Endothelial cell of umbilical vein (primary cell): ENCODE measurements at regions of chr6 and their contacts with region 1.

Region 1: DNA sequence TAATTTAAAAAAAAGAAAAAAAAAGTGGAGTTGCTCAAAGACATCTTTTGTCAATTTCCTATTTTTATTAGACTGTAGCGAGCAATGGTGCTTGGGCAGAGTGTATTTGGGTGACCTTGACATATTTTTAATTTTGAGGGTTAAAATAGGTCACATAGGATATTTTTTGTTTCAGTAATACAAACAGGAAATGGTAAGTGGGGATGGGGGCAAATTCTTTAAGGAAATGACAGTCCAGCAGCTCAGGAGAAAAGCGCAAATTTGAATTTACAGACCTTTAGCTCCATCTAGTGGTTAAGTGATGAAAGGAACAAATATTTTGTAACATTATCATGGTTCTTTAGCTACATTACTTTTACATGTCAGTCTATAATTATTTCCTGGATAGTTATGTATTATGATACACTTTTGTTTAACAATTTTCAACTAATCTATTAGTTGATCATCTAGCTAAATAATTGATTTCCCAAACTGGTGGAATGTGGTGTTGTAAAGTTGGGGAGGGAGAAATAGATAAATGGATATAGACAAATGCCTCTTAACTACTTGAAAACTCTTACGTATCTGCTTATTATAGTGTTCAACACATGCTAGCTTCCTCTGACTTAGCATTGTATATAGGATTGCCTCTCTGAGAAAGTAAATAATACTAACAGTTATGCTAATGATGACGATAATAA is 10.0 kb downstream of the CITED2 start:
- DNase-seq: peak; percentile 66
- H3K4me3 ChIP-seq: no peak overlapping the region
- H3K27ac ChIP-seq: no peak overlapping the region
- H3K4me1 ChIP-seq: peaks cover 18% of the 10 kb centered on the region
- H3K27me3 ChIP-seq: no peaks in the 10 kb centered on the region
- CTCF ChIP-seq: peak; percentile 19 to 43
- POLR2A ChIP-seq: no peak

Region 2: DNA sequence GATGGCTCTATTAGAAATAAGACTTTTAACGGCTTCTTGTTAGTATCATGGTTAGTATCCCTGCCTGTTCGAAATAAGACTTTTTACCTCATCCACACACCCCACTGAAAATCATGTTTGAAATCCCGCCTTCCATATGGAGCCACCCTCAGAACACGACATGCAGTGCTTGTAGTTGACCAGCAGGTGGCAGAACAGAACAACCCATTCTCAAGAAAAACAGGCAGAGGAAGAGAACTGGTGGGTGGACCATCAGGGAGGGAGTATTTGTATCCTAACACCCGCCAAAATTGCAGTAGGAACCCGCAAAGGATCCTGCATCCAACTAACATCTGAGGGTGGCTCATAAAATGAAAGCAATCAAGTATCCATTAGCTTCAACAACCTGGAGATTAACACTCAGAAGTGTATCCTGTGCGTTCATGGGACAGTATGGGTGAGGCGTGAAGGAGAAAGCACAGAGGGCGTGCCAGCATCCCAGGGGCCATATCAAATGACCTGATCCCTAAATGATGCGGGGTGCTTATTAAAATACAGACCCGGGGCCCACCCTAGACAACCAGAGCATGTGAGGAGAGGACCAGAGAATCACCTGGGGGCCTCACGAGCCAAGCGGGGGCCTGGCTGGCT is 775.5 kb before region 1 on chr6:
- CTCF ChIA-PET with region 1: interaction called, 6 read pairs
- POLR2A ChIA-PET with region 1: no interaction called
- dilution Hi-C with region 1: no loop called
- intact Hi-C with region 1: loop called (anchors 1 kb)
- DNase-seq: peak; percentile 78
- H3K4me3 ChIP-seq: no peak overlapping the region
- H3K27ac ChIP-seq: no peak overlapping the region
- H3K4me1 ChIP-seq: peaks cover 21% of the 10 kb centered on the region
- H3K27me3 ChIP-seq: no peaks in the 10 kb centered on the region
- CTCF ChIP-seq: peak; percentile 80 to 85
- POLR2A ChIP-seq: no peak

Region 3: DNA sequence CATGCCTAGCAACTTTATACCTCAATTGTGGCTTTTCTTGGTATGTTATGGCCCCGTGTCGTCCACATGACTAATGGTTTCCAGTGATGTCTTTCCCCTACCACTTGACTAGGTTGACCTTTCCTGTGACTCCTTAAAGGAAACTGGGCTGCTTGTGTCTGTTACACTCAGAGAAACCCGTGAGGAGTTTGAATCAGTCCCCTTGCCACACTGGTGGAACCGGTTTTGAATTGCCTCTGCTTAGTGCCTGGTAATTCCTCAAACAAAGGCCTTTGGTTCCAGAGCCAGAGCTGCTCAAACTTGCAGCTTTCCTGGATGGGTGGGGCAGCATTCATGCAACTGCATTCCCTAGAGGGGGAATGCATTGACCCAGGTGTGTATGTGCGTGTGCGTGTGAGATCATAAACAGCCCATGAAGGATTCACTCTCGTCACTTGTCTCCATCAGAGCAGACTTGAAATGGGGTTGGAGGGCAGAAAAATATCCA is 546.6 kb before region 1 on chr6:
- CTCF ChIA-PET with region 1: interaction called, 56 read pairs
- POLR2A ChIA-PET with region 1: no interaction called
- dilution Hi-C with region 1: no loop called
- intact Hi-C with region 1: loop called (anchors 1 kb)
- DNase-seq: peak; percentile 56
- H3K4me3 ChIP-seq: no peak overlapping the region
- H3K27ac ChIP-seq: no peak overlapping the region
- H3K4me1 ChIP-seq: peaks cover 23% of the 10 kb centered on the region
- H3K27me3 ChIP-seq: no peaks in the 10 kb centered on the region
- CTCF ChIP-seq: no peak
- POLR2A ChIP-seq: no peak

Region 4: DNA sequence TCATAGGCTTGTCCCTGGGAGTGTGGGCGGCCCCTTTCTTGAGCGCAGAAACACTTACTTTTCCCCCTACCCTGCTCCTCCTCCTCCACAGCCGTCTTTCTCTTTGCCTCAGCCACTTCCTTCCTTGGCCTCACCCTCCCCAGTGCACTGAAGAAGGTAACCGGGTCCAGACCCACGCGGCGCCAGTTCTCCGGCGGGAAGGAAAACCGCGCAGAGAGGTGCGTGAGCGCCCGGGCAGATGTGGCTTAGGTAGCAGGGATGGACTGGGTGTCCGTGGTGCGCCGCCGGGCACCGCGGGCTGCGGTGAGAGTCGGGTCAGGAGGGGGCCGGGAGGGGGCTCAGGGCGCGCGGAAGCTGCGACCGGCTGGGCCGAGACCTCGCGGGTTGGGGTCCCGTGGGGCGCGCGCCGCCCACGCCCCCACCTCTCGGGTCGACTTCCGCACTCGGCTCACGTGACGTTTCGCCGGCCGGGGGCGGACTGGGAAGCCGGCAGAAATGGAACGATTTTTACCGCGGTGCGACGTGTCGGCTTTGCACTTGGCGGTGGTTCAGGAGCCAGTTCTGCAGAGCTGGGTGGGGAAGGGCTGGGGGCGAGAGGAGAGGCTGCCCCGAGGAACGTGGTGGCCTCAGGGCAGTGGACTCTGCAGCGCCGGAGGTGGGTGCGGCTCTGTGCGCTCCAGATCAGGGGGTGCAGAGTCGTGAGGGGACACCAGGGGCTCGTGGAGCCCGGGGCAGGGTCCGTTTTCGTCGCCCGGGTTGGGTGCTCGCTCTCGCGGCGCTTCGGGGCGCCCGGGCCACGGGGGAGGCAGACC is 335.6 kb before region 1 on chr6 and contains the start of gene ABRACL:
- CTCF ChIA-PET with region 1: interaction called, 3 read pairs
- POLR2A ChIA-PET with region 1: no interaction called
- dilution Hi-C with region 1: no loop called
- intact Hi-C with region 1: loop called (anchors 2 kb)
- DNase-seq: peak; percentile 70
- H3K4me3 ChIP-seq: peak within 1 kb of the TSS; percentile 74 to 94 (median 77)
- H3K27ac ChIP-seq: peak within 1 kb of the TSS; percentile 81
- H3K4me1 ChIP-seq: peaks cover 19% of the 10 kb centered on the region
- H3K27me3 ChIP-seq: no peaks in the 10 kb centered on the region
- CTCF ChIP-seq: no peak
- POLR2A ChIP-seq: peak; percentile 16
- total RNA-seq, gene ABRACL: 87.4 and 104 TPM in 2 replicates

Region 5: DNA sequence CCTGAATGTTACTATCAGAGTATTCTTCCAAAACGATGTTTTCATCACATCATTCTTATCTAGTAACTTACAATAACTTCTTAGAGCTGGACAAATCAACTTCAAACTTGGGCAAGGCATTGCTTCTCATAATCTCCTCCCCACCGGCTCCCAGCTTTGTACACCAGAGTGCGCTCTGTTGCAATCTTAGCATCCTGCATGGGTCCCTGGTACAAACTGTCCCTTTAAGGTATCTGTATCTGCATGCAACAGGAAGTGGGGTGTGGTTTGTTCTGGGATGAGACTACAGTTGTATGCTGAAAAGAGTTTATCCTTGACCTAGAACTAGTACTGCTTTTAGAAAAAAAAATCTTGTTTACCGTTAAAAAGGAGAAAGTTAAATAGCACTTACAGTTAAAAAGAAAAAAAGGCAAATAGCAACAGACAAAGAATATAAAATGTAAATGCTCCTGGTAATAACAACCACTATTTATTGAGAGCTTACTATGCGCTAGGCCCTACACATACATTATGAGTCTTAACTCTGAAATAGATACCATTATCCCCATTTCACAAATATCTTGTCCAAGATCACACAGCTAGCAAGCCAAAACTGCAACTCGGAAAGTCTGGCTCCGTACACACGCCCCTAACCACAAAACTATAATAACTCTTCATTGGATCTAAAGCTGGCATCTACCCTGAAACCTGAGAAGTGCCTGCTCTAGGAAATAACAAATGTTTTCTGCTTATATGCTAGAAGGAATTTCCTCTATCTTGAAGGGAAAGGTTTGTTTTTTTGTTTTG is 239.4 kb before region 1 on chr6:
- CTCF ChIA-PET with region 1: interaction called, 30 read pairs
- POLR2A ChIA-PET with region 1: no interaction called
- dilution Hi-C with region 1: no loop called
- intact Hi-C with region 1: loop called (anchors 1 kb)
- DNase-seq: peak; percentile 26
- H3K4me3 ChIP-seq: no peak overlapping the region
- H3K27ac ChIP-seq: no peak overlapping the region
- H3K4me1 ChIP-seq: no peaks in the 10 kb centered on the region
- H3K27me3 ChIP-seq: no peaks in the 10 kb centered on the region
- CTCF ChIP-seq: peak; percentile 25 to 33
- POLR2A ChIP-seq: no peak

Region 6: DNA sequence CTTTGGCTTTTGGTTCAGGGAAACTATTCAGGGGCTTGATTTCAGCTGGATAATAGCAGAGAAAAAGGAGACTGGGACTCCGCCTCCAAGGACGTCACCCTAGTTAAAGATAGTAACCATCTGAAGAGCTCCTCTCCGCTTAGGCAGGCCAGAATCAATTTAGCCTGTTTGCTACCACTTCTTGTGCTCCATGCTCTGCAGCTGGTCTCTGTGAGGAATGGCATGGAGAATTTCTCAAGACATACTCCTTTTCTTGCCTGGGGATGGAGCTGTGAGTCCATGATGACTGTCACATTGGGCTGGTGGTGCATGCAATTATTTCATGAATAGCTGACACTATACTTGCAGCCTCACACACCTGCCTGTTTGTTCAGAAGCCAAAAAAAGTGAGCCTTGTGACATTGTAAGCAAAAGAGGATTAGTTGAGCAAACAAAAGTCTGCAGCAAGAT is 134.0 kb before region 1 on chr6:
- CTCF ChIA-PET with region 1: interaction called, 33 read pairs
- POLR2A ChIA-PET with region 1: no interaction called
- dilution Hi-C with region 1: no loop called
- intact Hi-C with region 1: no loop called
- DNase-seq: no peak
- H3K4me3 ChIP-seq: no peak overlapping the region
- H3K27ac ChIP-seq: no peak overlapping the region
- H3K4me1 ChIP-seq: no peaks in the 10 kb centered on the region
- H3K27me3 ChIP-seq: no peaks in the 10 kb centered on the region
- CTCF ChIP-seq: no peak
- POLR2A ChIP-seq: no peak